ENCODE measurements at regions of chr3 and their contacts with region 1.

Region 1: DNA sequence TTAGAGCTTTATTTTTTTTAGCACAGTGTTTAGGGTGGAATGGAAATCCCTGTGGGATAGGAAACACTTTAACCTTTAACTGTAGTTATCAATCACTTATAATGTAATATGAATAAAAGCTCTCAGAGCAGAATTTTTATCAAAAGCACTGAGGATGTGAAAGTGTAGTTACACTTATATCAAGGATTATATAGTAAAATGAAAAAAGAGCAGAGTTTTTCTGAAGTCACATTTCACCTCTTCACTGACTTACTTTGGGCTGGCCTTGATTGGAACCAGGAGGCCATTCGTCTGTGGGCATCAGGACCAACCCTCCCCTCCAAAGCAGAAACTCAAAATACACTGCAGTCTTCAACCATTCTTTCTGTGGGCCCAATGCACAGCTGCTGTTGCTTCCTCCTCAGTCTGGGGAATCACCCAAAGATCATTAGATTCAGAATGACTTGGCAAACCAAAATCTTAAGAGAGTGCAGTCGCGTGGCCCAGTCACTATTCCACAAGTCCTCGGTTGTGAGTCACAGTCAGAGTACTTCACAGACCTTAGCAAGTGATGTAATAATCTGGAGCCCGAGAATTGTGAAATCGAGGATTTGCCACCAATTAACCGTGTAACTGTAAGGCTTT is 132.6 kb upstream of the COL8A1 start:
- DNase-seq: no peak
- H3K4me3 ChIP-seq: no peak overlapping the region
- H3K27ac ChIP-seq: no peak overlapping the region
- H3K4me1 ChIP-seq: no peaks in the 10 kb centered on the region
- H3K27me3 ChIP-seq: no peaks in the 10 kb centered on the region
- CTCF ChIP-seq: no peak

Region 2: DNA sequence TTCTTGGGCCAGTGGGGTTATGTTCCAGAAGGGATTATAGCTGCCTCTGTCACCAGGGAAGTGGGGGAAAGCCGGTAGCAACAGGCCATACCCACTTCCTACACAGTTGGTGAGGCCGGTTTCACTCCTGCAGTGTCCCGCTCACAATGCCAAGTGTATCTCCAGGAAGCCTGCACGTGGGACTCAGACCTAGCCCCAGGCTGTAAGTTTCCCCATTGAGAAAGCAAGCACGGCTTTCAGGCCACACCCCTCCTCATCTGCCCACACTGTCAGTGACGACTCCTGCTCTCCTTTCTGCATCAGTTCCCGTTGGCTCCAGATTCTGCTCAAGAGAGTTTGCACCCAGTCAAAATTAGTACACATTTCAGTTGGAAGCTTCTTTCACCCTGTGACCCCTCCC is 860.7 kb before region 1 on chr3:
- CTCF ChIA-PET with region 1: no interaction called
- POLR2A ChIA-PET with region 1: interaction called, 23 read pairs
- intact Hi-C with region 1: no loop called
- DNase-seq: no peak
- H3K4me3 ChIP-seq: no peak overlapping the region
- H3K27ac ChIP-seq: no peak overlapping the region
- H3K4me1 ChIP-seq: no peaks in the 10 kb centered on the region
- H3K27me3 ChIP-seq: no peaks in the 10 kb centered on the region
- CTCF ChIP-seq: no peak

Region 3: GRCh38 chr3:99071096-99071495 is 434.7 kb before region 1 on chr3:
- CTCF ChIA-PET with region 1: no interaction called
- POLR2A ChIA-PET with region 1: no interaction called
- intact Hi-C with region 1: no loop called
- DNase-seq: no peak
- H3K4me3 ChIP-seq: no peak overlapping the region
- H3K27ac ChIP-seq: no peak overlapping the region
- H3K4me1 ChIP-seq: no peaks in the 10 kb centered on the region
- H3K27me3 ChIP-seq: no peaks in the 10 kb centered on the region
- CTCF ChIP-seq: no peak

Region 4: GRCh38 chr3:99324636-99325203 is 181.0 kb before region 1 on chr3:
- CTCF ChIA-PET with region 1: no interaction called
- POLR2A ChIA-PET with region 1: interaction called, 10 read pairs
- intact Hi-C with region 1: no loop called
- DNase-seq: peak in 1 of 2 experiments; percentile 33
- H3K4me3 ChIP-seq: no peak overlapping the region
- H3K27ac ChIP-seq: no peak overlapping the region
- H3K4me1 ChIP-seq: no peaks in the 10 kb centered on the region
- H3K27me3 ChIP-seq: no peaks in the 10 kb centered on the region
- CTCF ChIP-seq: no peak

Region 5: DNA sequence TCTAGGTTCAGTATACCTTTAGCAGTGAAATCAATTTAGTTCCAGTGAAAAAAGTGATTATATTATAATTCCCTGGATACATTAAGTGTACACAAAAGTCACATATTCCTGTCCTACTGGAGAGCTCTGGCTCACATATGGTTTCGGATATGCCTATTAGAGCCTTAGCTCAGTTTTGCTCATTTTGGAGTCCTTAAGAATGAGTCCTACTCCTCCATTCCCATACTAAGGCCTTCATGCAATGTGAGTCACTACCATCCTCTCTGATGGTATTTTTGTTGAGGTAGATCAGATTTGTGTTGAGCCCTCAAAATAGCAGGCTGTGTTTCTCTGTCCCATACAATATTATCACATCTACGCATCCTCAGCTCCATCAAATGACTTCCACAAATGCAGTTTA is 161.5 kb before region 1 on chr3:
- CTCF ChIA-PET with region 1: no interaction called
- POLR2A ChIA-PET with region 1: no interaction called
- intact Hi-C with region 1: no loop called
- DNase-seq: no peak
- H3K4me3 ChIP-seq: no peak overlapping the region
- H3K27ac ChIP-seq: no peak overlapping the region
- H3K4me1 ChIP-seq: no peaks in the 10 kb centered on the region
- H3K27me3 ChIP-seq: no peaks in the 10 kb centered on the region
- CTCF ChIP-seq: no peak

Region 6: DNA sequence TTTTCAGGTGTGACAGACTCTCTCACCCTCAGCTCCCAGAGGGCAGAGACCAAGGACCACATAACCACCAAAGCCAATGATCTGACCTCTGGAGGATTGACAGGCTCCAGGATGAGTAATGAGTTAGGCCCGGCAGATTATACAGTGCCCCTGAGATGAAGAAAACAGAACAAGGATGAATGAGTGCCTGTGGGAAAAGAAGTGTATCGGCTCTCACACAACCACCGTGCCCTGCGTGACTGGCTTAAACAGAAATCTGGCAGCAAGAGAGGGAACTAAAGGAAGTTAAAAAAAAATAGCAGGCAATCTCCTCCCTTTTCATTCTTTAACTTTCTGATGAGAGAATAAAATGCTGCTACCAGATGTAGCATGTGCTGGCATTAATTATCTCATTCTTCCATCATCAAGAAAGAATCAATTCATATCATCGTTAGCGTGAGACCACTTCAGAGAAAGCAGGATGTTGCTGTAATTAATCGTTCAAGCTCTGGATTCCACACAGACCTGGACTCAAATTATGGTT is 94.9 kb before region 1 on chr3:
- CTCF ChIA-PET with region 1: no interaction called
- POLR2A ChIA-PET with region 1: no interaction called
- intact Hi-C with region 1: no loop called
- DNase-seq: peak in 1 of 2 experiments; percentile 13
- H3K4me3 ChIP-seq: no peak overlapping the region
- H3K27ac ChIP-seq: no peak overlapping the region
- H3K4me1 ChIP-seq: no peaks in the 10 kb centered on the region
- H3K27me3 ChIP-seq: no peaks in the 10 kb centered on the region
- CTCF ChIP-seq: no peak

Region 7: GRCh38 chr3:99620077-99620767 is 114.5 kb after region 1 on chr3:
- CTCF ChIA-PET with region 1: no interaction called
- POLR2A ChIA-PET with region 1: no interaction called
- intact Hi-C with region 1: no loop called
- DNase-seq: no peak
- H3K4me3 ChIP-seq: no peak overlapping the region
- H3K27ac ChIP-seq: no peak overlapping the region
- H3K4me1 ChIP-seq: no peaks in the 10 kb centered on the region
- H3K27me3 ChIP-seq: no peaks in the 10 kb centered on the region
- CTCF ChIP-seq: peak; percentile 29; the same call in 1 of the 2 replicates